CD8-positive, alpha-beta memory T cell (primary cell): ENCODE measurements at regions of chr13 and their contacts with region 1.

Region 1: GRCh38 chr13:49443704-49444523 is at the starts of genes CAB39L and SETDB2:
- DNase-seq: peak; percentile 97 to 100 (median 99)
- H3K4me3 ChIP-seq: peak within 1 kb of the TSS; percentile 96
- H3K4me3 Mint-ChIP-seq: peak within 1 kb of the TSS; percentile 90 to 99 (median 95)
- H3K27ac ChIP-seq: peak within 1 kb of the TSS; percentile 93
- H3K27ac Mint-ChIP-seq: peak within 1 kb of the TSS; percentile 89 to 99 (median 99)
- H3K4me1 ChIP-seq: peaks cover 43% of the 10 kb centered on the region
- H3K4me1 Mint-ChIP-seq: peaks cover 46 to 61% (median 57%) of the 10 kb centered on the region in 3 donors
- H3K27me3 ChIP-seq: no peaks in the 10 kb centered on the region
- H3K27me3 Mint-ChIP-seq: peaks cover 0 to 3% of the 10 kb centered on the region in 2 donors
- total RNA-seq, gene CAB39L: 5.8 to 7.4 TPM
- total RNA-seq, gene SETDB2: 13.1 to 13.4 TPM

Region 2: GRCh38 chr13:49346460-49346859 is 97.5 kb before region 1 on chr13:
- CTCF ChIA-PET with region 1: no interaction called
- POLR2A ChIA-PET with region 1: no interaction called
- DNase-seq: no peak
- H3K4me3 ChIP-seq: no peak overlapping the region
- H3K4me3 Mint-ChIP-seq: no peak overlapping the region
- H3K27ac ChIP-seq: no peak overlapping the region
- H3K27ac Mint-ChIP-seq: peak overlapping the region in 1 of 8 donors; percentile 56
- H3K4me1 ChIP-seq: no peaks in the 10 kb centered on the region
- H3K4me1 Mint-ChIP-seq: peaks cover 0 to 8% (median 5%) of the 10 kb centered on the region in 3 donors
- H3K27me3 ChIP-seq: no peaks in the 10 kb centered on the region
- H3K27me3 Mint-ChIP-seq: no peaks in the 10 kb centered on the region

Region 3: DNA sequence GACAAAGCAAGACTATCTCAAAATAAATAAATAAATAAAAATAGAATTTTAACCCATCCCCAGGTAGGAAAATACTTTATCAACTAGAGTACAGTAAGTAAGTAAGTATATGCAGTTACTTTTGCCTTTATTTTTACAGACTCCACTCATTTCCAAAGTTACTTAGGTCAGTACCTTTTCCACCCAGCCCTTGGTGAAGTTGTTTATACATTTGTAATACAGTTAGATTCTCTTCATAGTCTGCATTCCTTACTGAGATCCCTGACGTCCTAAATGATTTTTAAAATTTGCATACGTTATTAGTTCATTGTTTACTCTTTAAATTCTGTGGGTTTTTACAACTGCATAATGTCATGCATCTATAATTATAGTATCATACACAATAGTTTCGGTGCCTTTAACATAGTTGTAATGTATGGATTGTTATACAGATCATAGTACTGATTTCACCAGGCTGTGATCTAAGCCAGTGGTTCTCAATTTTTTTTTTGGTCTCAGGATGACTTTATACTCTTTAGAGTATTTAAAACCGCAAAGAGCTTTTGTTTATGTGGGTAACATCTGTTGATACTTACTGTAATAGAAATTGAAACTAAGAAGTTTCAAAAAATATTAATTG is 10.6 kb after region 1 on chr13:
- CTCF ChIA-PET with region 1: interaction called, 19 read pairs
- POLR2A ChIA-PET with region 1: interaction called, 8 read pairs
- DNase-seq: peak in 1 of 5 donors; percentile 31
- H3K4me3 ChIP-seq: no peak overlapping the region
- H3K4me3 Mint-ChIP-seq: peak overlapping the region; percentile 1 to 68 (median 55)
- H3K27ac ChIP-seq: peak overlapping the region; percentile 27
- H3K27ac Mint-ChIP-seq: peak overlapping the region; percentile 11 to 88 (median 78)
- H3K4me1 ChIP-seq: peaks cover 21% of the 10 kb centered on the region
- H3K4me1 Mint-ChIP-seq: peaks cover 30 to 60% (median 58%) of the 10 kb centered on the region in 3 donors
- H3K27me3 ChIP-seq: no peaks in the 10 kb centered on the region
- H3K27me3 Mint-ChIP-seq: no peaks in the 10 kb centered on the region

Region 4: DNA sequence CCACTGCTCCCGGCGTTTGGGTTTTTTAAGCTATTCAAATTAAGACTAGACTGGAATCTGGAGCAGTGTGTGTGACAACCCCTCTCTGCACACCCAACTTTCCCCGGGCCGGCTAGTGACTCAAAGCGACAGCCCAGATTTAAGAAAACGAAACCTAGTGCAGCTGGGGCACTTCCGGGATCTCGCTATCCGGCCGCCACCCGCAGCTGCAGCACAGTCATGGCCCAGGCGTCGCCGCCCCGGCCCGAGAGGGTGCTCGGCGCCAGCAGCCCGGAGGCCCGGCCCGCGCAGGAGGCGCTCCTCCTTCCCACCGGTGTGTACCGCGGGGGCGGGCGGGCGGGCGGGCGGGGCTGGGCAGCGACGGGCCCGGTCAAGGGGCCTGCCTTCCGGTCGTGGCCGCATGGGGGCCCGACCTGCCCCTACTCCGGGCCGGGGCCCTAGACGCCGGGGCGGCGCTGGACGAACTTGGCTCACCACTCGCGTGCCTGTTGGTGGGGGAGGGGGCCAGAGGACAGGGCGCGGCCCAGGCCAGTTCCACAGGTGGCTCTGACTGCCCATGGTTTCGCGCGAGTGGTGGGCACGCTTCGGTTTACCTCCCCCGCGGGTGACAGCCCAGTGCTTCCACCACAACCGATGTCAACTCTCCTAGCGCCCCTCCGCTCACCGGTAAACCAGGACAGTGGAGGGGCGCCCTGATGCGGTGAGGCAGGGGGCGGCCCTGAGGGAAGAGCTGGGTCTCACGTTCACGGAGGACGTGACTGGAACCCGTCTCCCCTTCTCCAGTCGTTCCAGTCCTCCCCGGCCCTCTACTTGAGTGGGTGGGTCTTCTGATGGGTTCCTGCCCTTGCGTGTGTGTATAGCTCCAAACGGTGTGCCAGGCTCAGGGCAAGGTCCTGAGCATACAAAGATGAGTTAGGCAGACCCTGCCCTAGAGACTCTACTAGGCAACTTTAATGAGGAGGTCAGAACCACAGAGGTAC is 52.2 kb after region 1 on chr13 and contains the start of gene PHF11:
- CTCF ChIA-PET with region 1: interaction called, 14 read pairs
- POLR2A ChIA-PET with region 1: interaction called, 67 read pairs
- DNase-seq: peak; percentile 78 to 92 (median 84)
- H3K4me3 ChIP-seq: peak within 1 kb of the TSS; percentile 82
- H3K4me3 Mint-ChIP-seq: peak within 1 kb of the TSS; percentile 95 to 99 (median 98)
- H3K27ac ChIP-seq: peak within 1 kb of the TSS; percentile 87
- H3K27ac Mint-ChIP-seq: peak within 1 kb of the TSS; percentile 94 to 100 (median 99)
- H3K4me1 ChIP-seq: peaks cover 44% of the 10 kb centered on the region
- H3K4me1 Mint-ChIP-seq: peaks cover 44 to 62% (median 51%) of the 10 kb centered on the region in 3 donors
- H3K27me3 ChIP-seq: no peaks in the 10 kb centered on the region
- H3K27me3 Mint-ChIP-seq: no peaks in the 10 kb centered on the region
- total RNA-seq, gene PHF11: 39.1 to 43.5 TPM

Region 5: GRCh38 chr13:49585220-49586157 is 141.6 kb after region 1 on chr13 and contains the start of gene RCBTB1:
- CTCF ChIA-PET with region 1: no interaction called
- POLR2A ChIA-PET with region 1: interaction called, 12 read pairs
- DNase-seq: peak; percentile 67 to 83 (median 71)
- H3K4me3 ChIP-seq: peak within 1 kb of the TSS; percentile 91
- H3K4me3 Mint-ChIP-seq: peak within 1 kb of the TSS; percentile 88 to 98 (median 92)
- H3K27ac ChIP-seq: peak within 1 kb of the TSS; percentile 70
- H3K27ac Mint-ChIP-seq: peak within 1 kb of the TSS; percentile 69 to 99 (median 96)
- H3K4me1 ChIP-seq: peaks cover 13% of the 10 kb centered on the region
- H3K4me1 Mint-ChIP-seq: peaks cover 35 to 48% (median 46%) of the 10 kb centered on the region in 3 donors
- H3K27me3 ChIP-seq: no peaks in the 10 kb centered on the region
- H3K27me3 Mint-ChIP-seq: no peaks in the 10 kb centered on the region
- total RNA-seq, gene RCBTB1: 19.3 to 21.2 TPM